ENCODE measurements at regions of chr5 and their contacts with region 1.

Region 1: GRCh38 chr5:112833971-112834370 is 27.1 kb upstream of the SRP19 start:
- DNase-seq: no peak
- ATAC-seq: no peak
- H3K4me3 ChIP-seq: no peak overlapping the region
- H3K4me3 Mint-ChIP-seq: no peak overlapping the region
- H3K27ac ChIP-seq: no peak overlapping the region
- H3K27ac Mint-ChIP-seq: no peak overlapping the region
- H3K4me1 ChIP-seq: no peaks in the 10 kb centered on the region
- H3K4me1 Mint-ChIP-seq: no peaks in the 10 kb centered on the region
- H3K27me3 ChIP-seq: no peaks in the 10 kb centered on the region
- H3K27me3 Mint-ChIP-seq: no peaks in the 10 kb centered on the region
- CTCF ChIP-seq: no peak

Region 2: GRCh38 chr5:112848116-112848811 is 14.3 kb after region 1 on chr5:
- CTCF ChIA-PET with region 1: interaction called, 11 read pairs
- POLR2A ChIA-PET with region 1: no interaction called
- intact Hi-C with region 1: no loop called
- DNase-seq: peak in 3 of 9 experiments; percentile 11 to 68 (median 58)
- ATAC-seq: peak; percentile 99
- H3K4me3 ChIP-seq: no peak overlapping the region
- H3K4me3 Mint-ChIP-seq: no peak overlapping the region
- H3K27ac ChIP-seq: no peak overlapping the region
- H3K27ac Mint-ChIP-seq: peak overlapping the region; percentile 21
- H3K4me1 ChIP-seq: no peaks in the 10 kb centered on the region
- H3K4me1 Mint-ChIP-seq: peaks cover 4% of the 10 kb centered on the region
- H3K27me3 ChIP-seq: no peaks in the 10 kb centered on the region
- H3K27me3 Mint-ChIP-seq: peaks cover 7% of the 10 kb centered on the region
- CTCF ChIP-seq: peak; percentile 80

Region 3: DNA sequence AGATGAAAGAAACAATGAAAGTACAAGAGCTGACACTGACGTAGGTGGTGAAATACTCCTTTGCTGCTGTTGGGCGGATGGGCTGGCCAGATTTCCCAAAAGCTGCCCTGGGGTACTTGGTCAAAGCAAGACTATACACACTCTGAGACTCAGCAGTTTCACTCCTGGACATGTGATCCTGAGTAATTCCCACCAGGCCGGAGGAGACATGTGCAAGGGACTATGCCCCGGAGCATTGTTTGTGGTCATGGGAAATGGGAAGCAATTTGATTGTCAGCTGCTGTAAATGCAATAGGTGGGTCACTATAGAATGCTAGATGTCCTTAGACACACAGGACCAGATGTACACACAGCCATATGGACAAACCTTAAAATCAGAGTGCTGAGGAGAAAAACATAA is 258.7 kb after region 1 on chr5:
- CTCF ChIA-PET with region 1: no interaction called
- POLR2A ChIA-PET with region 1: no interaction called
- intact Hi-C with region 1: no loop called
- DNase-seq: no peak
- ATAC-seq: no peak
- H3K4me3 ChIP-seq: no peak overlapping the region
- H3K4me3 Mint-ChIP-seq: no peak overlapping the region
- H3K27ac ChIP-seq: no peak overlapping the region
- H3K27ac Mint-ChIP-seq: no peak overlapping the region
- H3K4me1 ChIP-seq: peaks cover 15% of the 10 kb centered on the region
- H3K4me1 Mint-ChIP-seq: peaks cover 25% of the 10 kb centered on the region
- H3K27me3 ChIP-seq: no peaks in the 10 kb centered on the region
- H3K27me3 Mint-ChIP-seq: no peaks in the 10 kb centered on the region
- CTCF ChIP-seq: no peak

Region 4: GRCh38 chr5:113320273-113320780 is 486.4 kb after region 1 on chr5:
- CTCF ChIA-PET with region 1: no interaction called
- POLR2A ChIA-PET with region 1: no interaction called
- intact Hi-C with region 1: no loop called
- DNase-seq: no peak
- ATAC-seq: no peak
- H3K4me3 ChIP-seq: no peak overlapping the region
- H3K4me3 Mint-ChIP-seq: no peak overlapping the region
- H3K27ac ChIP-seq: no peak overlapping the region
- H3K27ac Mint-ChIP-seq: no peak overlapping the region
- H3K4me1 ChIP-seq: no peaks in the 10 kb centered on the region
- H3K4me1 Mint-ChIP-seq: no peaks in the 10 kb centered on the region
- H3K27me3 ChIP-seq: no peaks in the 10 kb centered on the region
- H3K27me3 Mint-ChIP-seq: no peaks in the 10 kb centered on the region
- CTCF ChIP-seq: no peak